CD4-positive, alpha-beta memory T cell (primary cell): ENCODE measurements at regions of chr17 and their contacts with region 1.

Region 1: DNA sequence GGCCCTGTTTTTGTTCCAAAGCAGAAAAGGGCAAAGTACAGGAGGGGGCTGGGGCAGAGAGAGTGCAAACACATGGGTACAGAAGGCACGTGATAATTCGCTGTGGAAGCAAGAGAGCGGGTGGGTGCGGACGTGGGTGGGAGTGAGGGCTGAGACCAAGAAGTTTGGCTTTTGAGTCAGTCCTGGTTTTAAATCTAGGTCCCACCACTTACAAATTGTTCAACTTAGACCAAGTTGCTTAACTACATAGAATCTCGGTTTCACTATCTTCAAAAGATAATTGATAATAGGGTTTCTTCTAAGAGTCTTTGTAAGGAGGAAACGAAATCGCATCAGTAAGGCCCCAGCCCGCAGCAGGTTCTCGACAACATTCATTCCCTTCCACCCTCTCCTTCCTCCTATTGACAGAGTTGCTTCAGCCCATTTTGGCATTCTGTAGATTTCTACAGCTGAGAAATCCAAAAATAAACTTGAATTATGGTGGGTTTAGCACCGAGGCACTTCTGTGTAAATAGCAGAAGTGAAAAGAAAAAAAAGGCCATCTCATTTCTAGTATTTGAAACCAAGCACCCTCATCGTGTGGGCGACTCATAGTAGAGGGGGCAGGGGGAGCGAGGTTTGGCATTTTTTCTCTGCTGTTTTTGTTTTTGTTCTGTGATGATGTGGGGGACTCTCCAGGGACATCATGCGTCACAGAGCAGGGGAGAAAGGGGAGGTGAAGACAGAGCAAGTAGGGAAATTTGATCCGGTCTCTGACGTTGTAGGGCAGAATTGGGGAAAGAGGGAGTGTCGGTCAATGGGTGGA is 33.6 kb upstream of the CCR7 start:
- DNase-seq: peak; percentile 72 to 92 (median 77)
- H3K4me3 ChIP-seq: no peak overlapping the region
- H3K4me3 Mint-ChIP-seq: peak overlapping the region; percentile 67 to 89 (median 84)
- H3K27ac ChIP-seq: peak overlapping the region; percentile 92
- H3K27ac Mint-ChIP-seq: peak overlapping the region; percentile 94 to 100 (median 99)
- H3K4me1 ChIP-seq: peaks cover 88% of the 10 kb centered on the region
- H3K4me1 Mint-ChIP-seq: peaks cover 63 to 95% (median 78%) of the 10 kb centered on the region in 4 donors
- H3K27me3 ChIP-seq: no peaks in the 10 kb centered on the region
- H3K27me3 Mint-ChIP-seq: no peaks in the 10 kb centered on the region

Region 2: DNA sequence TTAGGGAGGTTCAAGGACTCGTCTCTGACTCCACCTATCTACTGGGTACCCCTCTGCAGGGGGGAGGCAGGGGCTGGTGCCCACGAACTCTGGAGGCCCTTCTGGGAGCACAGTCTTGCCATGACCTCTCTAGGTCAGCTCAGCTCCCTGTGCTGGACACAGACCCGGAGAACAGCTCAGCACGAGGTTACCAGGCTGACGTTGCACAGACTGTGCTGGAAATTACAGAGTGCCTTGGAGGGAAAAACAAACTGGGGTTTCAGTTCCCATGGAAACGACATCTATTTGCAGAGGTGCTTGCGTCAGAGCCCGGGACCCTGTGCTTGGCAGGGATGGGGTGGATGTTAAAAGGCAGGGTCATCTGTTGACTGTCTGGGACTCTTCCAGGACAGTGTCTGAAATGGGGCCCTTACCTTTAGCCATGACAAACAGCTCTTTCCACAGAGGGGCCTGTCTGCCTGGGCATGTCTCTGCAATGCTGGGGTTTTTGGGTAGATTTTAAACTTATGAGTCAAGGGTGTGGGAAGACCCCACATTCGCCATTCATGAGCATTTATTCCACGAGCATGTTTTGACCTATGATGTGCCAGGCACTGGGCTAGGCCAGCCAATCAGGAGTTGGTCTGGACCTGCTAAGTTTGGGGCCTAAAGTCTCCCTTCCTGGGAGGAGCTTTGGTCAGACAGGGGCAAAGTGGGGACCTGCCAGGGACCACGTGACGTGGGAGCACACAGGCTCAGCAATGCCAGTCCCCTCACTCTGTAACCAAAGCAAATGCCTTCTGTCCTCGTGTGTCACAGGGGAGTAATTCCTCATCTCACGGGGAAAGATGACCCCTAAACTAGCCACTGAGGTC is 56.1 kb before region 1 on chr17:
- CTCF ChIA-PET with region 1: interaction called, 3 read pairs
- POLR2A ChIA-PET with region 1: interaction called, 1,226 read pairs
- intact Hi-C with region 1: no loop called
- DNase-seq: peak in 4 of 5 donors; percentile 37 to 82 (median 50)
- H3K4me3 ChIP-seq: no peak overlapping the region
- H3K4me3 Mint-ChIP-seq: peak overlapping the region in 6 of 8 donors; percentile 67 to 94 (median 88)
- H3K27ac ChIP-seq: peak overlapping the region; percentile 69
- H3K27ac Mint-ChIP-seq: peak overlapping the region; percentile 94 to 100 (median 99)
- H3K4me1 ChIP-seq: peaks cover 90% of the 10 kb centered on the region
- H3K4me1 Mint-ChIP-seq: peaks cover 60 to 91% (median 75%) of the 10 kb centered on the region in 4 donors
- H3K27me3 ChIP-seq: no peaks in the 10 kb centered on the region
- H3K27me3 Mint-ChIP-seq: peaks cover 0 to 4% of the 10 kb centered on the region in 2 donors

Region 3: DNA sequence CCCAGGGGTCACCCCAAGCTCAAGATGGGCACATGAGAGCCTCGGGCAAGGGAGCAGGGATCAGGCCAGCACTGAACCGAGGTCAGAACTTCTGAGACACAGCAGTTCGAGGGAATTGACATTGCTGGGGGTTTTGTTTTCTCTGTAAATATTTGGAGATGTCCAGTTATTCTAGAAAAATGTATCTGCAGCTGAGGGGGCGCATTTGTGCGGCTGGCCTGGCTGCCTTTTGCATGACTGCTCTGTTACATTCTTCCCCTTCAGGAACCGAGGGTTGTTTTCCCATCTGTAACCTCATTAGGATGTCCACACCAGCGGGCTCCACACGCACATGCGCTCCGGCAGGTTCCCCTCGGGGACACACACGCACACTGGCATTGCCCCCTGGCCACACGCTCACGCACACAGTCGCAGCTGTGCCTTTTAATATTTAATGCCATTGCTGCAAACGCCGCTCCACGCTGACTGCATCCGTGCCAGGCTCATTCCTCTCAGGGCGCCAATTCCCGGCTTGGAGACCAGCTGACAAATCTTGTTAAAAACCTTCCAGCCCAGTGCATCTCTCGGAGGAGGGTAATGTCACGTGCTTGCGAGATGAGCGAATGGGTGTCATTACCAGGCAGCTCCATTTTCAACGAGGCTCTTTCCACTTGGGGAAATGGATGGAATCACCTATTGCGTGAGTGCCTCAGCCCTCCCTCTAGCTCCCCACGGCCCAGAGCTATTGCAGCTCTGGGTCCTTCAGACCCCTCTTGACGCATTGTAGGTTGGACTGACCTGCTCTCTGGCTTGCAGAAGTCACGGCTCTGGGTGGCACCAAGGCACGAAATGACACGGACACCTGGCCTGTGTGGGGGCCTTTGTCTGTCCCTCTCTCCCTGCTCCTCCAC is 46.7 kb before region 1 on chr17:
- CTCF ChIA-PET with region 1: interaction called, 3 read pairs
- POLR2A ChIA-PET with region 1: interaction called, 1,226 read pairs
- intact Hi-C with region 1: no loop called
- DNase-seq: peak in 1 of 5 donors; percentile 25
- H3K4me3 ChIP-seq: no peak overlapping the region
- H3K4me3 Mint-ChIP-seq: peak overlapping the region in 5 of 8 donors; percentile 13 to 69 (median 27)
- H3K27ac ChIP-seq: no peak overlapping the region
- H3K27ac Mint-ChIP-seq: peak overlapping the region; percentile 60 to 96 (median 89)
- H3K4me1 ChIP-seq: peaks cover 99% of the 10 kb centered on the region
- H3K4me1 Mint-ChIP-seq: peaks cover 69 to 100% (median 86%) of the 10 kb centered on the region in 4 donors
- H3K27me3 ChIP-seq: no peaks in the 10 kb centered on the region
- H3K27me3 Mint-ChIP-seq: no peaks in the 10 kb centered on the region

Region 4: DNA sequence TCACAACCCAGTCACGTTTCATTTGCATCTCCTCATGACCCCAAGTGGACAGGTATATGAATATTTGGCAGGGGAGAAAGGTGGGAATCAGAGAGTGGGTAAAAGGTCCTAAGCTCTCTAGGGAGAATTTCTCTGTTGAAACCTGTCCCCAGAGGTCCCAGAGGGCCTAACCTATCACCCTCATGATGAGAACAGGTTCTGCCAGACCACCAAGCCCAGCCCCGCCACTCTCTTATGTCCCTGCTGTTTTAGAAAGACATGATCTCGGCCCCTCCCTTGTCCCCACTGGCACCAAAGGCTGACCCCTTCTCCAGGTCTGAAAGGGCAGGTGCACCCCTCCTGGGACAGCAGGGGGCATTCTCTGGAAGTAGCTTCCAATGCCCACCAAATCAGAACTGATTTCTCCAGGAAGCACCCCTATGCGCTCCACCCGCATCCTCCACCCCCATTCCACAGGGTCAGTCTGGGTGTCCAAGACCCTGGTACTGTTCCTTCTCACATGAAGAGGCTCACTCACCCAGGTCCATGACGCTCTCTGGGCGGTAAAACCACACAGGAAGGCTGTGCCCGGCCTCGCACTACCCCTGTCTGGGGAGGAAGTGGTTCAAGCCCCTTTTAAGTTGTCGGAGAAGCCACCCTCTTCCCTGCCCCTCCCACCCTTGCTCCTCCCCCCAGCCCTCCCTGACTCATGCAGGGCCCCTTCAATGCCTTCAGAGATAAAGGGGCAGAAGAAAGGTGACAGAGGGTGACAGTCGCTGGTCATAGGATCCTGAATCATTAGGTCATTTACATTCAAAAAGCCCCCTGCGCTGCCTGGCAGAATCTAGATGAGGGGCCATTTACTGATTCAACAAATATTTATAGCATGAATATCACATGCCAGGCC is 33.7 kb before region 1 on chr17 and contains the start of gene CCR7:
- CTCF ChIA-PET with region 1: interaction called, 61 read pairs
- POLR2A ChIA-PET with region 1: interaction called, 1,226 read pairs
- intact Hi-C with region 1: loop called (anchors 2 kb)
- DNase-seq: peak; percentile 83 to 94 (median 85)
- H3K4me3 ChIP-seq: peak within 1 kb of the TSS; percentile 94 to 96
- H3K4me3 Mint-ChIP-seq: peak within 1 kb of the TSS; percentile 88 to 98 (median 96)
- H3K27ac ChIP-seq: peak within 1 kb of the TSS; percentile 94
- H3K27ac Mint-ChIP-seq: peak within 1 kb of the TSS; percentile 95 to 100 (median 99)
- H3K4me1 ChIP-seq: peaks cover 73% of the 10 kb centered on the region
- H3K4me1 Mint-ChIP-seq: peaks cover 38 to 83% (median 60%) of the 10 kb centered on the region in 4 donors
- H3K27me3 ChIP-seq: no peaks in the 10 kb centered on the region
- H3K27me3 Mint-ChIP-seq: no peaks in the 10 kb centered on the region
- total RNA-seq, gene CCR7: 268 to 269 TPM

Region 5: GRCh38 chr17:40582328-40582901 is 16.4 kb before region 1 on chr17:
- CTCF ChIA-PET with region 1: interaction called, 9 read pairs
- POLR2A ChIA-PET with region 1: interaction called, 63 read pairs
- intact Hi-C with region 1: loop called (anchors 1 kb)
- DNase-seq: peak; percentile 74 to 78 (median 76)
- H3K4me3 ChIP-seq: peak overlapping the region; percentile 28 to 34
- H3K4me3 Mint-ChIP-seq: peak overlapping the region; percentile 32 to 84 (median 80)
- H3K27ac ChIP-seq: peak overlapping the region; percentile 47
- H3K27ac Mint-ChIP-seq: peak overlapping the region; percentile 75 to 96 (median 95)
- H3K4me1 ChIP-seq: peaks cover 72% of the 10 kb centered on the region
- H3K4me1 Mint-ChIP-seq: peaks cover 57 to 95% (median 78%) of the 10 kb centered on the region in 4 donors
- H3K27me3 ChIP-seq: no peaks in the 10 kb centered on the region
- H3K27me3 Mint-ChIP-seq: no peaks in the 10 kb centered on the region

Region 6: GRCh38 chr17:40588552-40588951 is 10.3 kb before region 1 on chr17:
- CTCF ChIA-PET with region 1: interaction called, 5 read pairs
- POLR2A ChIA-PET with region 1: interaction called, 63 read pairs
- intact Hi-C with region 1: no loop called
- DNase-seq: peak in 1 of 5 donors; percentile 35
- H3K4me3 ChIP-seq: peak overlapping the region in 1 of 2 donors; percentile 1
- H3K4me3 Mint-ChIP-seq: peak overlapping the region in 7 of 8 donors; percentile 36 to 86 (median 75)
- H3K27ac ChIP-seq: no peak overlapping the region
- H3K27ac Mint-ChIP-seq: peak overlapping the region in 6 of 7 donors; percentile 9 to 89 (median 77)
- H3K4me1 ChIP-seq: peaks cover 50% of the 10 kb centered on the region
- H3K4me1 Mint-ChIP-seq: peaks cover 45 to 71% (median 56%) of the 10 kb centered on the region in 4 donors
- H3K27me3 ChIP-seq: no peaks in the 10 kb centered on the region
- H3K27me3 Mint-ChIP-seq: no peaks in the 10 kb centered on the region

Region 7: DNA sequence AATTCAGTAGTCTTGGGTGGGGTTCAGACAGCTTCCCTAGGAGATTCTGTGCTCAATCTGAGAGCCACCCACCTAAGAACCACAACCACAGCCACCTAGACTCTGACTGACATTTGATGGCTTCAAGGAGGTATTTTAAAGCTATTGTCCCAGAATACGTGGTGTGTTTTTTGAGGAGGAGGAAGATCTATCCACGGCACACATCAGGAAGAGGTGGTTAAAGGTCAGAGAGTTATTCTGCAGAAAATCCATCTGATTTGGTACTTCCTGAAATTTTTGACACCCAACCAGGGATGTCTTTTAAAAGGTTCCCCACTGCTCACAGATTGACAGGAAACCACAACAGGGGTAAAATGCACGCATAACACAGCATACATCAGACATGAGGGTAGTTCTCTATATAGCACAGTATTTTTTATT is 23.7 kb after region 1 on chr17:
- CTCF ChIA-PET with region 1: interaction called, 48 read pairs
- POLR2A ChIA-PET with region 1: interaction called, 187 read pairs
- intact Hi-C with region 1: no loop called
- DNase-seq: peak; percentile 34 to 59 (median 46)
- H3K4me3 ChIP-seq: no peak overlapping the region
- H3K4me3 Mint-ChIP-seq: peak overlapping the region in 7 of 8 donors; percentile 1 to 74 (median 49)
- H3K27ac ChIP-seq: peak overlapping the region; percentile 7
- H3K27ac Mint-ChIP-seq: peak overlapping the region; percentile 37 to 88 (median 72)
- H3K4me1 ChIP-seq: peaks cover 51% of the 10 kb centered on the region
- H3K4me1 Mint-ChIP-seq: peaks cover 31 to 42% (median 38%) of the 10 kb centered on the region in 4 donors
- H3K27me3 ChIP-seq: no peaks in the 10 kb centered on the region
- H3K27me3 Mint-ChIP-seq: no peaks in the 10 kb centered on the region